MCF 10A (cell line): ENCODE measurements at regions of chr5 and their contacts with region 1.

Region 1: DNA sequence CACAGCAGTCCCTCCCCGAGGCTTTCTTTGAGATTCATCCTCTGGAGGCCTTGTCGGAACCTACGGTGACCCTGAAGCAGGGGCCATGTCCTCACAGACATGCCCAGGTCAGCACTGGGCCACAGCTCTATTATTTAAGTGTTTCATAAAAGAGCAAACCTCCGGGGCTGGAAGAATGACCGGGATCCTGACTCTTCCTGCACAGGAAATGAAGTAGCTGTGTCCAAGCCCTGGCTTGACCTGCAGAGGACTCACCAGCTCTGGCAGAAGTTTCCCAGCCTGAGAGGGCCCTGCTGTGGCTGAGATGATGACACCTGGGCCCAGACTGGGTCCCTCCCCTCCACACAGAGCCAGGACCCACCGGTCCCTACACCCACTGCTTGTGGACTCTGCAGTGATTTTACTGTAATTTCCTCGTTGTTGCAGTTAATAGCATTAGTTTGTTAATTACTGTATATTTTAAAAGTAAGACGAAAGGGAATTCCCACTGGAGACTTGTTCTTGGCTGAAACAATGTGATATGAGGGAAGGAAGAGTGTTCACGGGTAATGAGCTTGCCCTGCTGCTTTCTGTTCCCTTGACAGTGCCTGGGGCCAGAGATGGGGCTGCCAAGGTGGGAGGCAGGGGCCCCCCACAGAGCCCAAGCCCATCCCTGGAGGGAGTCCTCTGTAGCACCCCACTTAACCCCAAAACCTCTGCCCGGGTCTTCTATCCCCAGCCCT is 72.2 kb downstream of the PCDH1 start:
- DNase-seq: no peak
- H3K4me3 Mint-ChIP-seq: no peak overlapping the region
- H3K27ac Mint-ChIP-seq: no peak overlapping the region
- H3K4me1 Mint-ChIP-seq: no peaks in the 10 kb centered on the region
- H3K27me3 Mint-ChIP-seq: peaks cover 73% of the 10 kb centered on the region
- CTCF ChIP-seq: no peak

Region 2: DNA sequence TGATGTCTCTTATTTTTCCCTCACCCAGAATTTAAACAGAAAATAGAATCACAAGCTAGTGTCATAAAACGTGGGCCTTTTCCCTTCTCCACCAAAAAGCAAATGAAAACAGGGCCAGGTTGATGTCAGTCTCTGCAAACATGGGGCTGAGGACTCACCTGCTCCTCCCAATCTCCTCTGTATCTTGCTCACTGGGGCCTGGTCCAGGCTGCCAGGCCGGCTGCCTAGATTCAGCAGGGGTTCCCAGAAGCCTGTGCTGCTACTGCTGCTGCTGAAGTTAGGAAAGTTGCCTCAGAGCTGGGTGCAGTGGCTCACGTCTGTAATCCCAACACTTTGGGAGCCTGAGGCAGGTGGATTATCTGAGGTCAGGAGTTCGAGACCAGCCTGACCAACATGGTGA is 12.2 kb before region 1 on chr5:
- CTCF ChIA-PET with region 1: interaction called, 12 read pairs
- POLR2A ChIA-PET with region 1: no interaction called
- intact Hi-C with region 1: no loop called
- DNase-seq: no peak
- H3K4me3 Mint-ChIP-seq: no peak overlapping the region
- H3K27ac Mint-ChIP-seq: no peak overlapping the region
- H3K4me1 Mint-ChIP-seq: no peaks in the 10 kb centered on the region
- H3K27me3 Mint-ChIP-seq: peaks cover 13% of the 10 kb centered on the region
- CTCF ChIP-seq: no peak